Lower lobe of right lung (tissue), 2 donors: ENCODE measurements at regions of chr11 and their contacts with region 1.

Region 1: GRCh38 chr11:75388386-75389275 is 10.7 kb upstream of the RPS3 start:
- DNase-seq: peak; percentile 77
- ATAC-seq: peak; percentile 75 to 85
- H3K4me3 ChIP-seq: no peak overlapping the region
- H3K27ac ChIP-seq: peak overlapping the region; percentile 27
- H3K4me1 ChIP-seq: peaks cover 20% of the 10 kb centered on the region
- H3K27me3 ChIP-seq: no peaks in the 10 kb centered on the region
- CTCF ChIP-seq: peak; percentile 85

Region 2: GRCh38 chr11:75280227-75280701 is 108.4 kb before region 1 on chr11:
- intact Hi-C with region 1: loop called (anchors 10 kb)
- DNase-seq: peak; percentile 75
- ATAC-seq: peak; percentile 77 to 86
- H3K4me3 ChIP-seq: no peak overlapping the region
- H3K27ac ChIP-seq: peak overlapping the region; percentile 58
- H3K4me1 ChIP-seq: peaks cover 44% of the 10 kb centered on the region
- H3K27me3 ChIP-seq: no peaks in the 10 kb centered on the region
- CTCF ChIP-seq: peak; percentile 96

Region 3: DNA sequence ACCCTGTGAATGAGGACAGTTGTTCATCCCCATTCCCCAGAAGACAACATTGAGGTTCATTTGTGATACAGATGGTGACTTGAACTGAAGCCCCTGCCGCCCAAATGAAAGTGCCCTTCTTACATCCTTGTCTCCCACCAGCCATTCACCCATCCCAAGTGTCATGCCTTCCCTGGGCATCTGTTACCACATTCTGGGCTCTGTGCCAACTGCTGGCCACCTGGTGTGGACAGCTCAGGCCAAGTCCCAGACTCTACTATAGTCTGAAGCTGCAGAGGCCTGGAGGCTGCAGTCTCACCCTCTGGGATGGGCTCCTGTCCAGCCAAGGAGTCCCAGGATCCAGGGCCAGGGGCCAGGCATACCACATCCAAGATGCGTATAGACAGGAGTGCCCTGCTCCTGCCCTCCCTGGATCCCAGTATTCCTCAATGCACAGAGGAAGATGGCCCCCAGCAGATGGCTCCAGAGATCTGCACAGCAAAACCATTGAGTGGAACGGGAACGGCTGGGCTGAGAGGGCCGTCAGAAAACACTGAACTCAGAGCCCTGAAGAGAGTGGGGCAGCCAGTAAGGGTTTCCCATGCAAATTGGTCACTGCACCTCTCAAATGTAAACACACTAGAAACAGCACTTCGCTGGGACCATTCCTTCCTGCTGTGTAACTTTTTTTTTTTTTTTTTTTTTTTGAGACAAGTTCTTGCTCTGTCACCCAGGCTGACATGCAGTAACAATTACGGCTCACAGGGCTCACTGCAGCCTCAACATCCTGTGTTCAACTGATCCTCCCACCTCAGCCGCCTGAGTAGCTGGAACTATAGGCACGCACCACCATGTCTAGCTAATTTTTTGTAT is 60.0 kb before region 1 on chr11:
- intact Hi-C with region 1: loop called (anchors 10 kb)
- DNase-seq: peak; percentile 86
- ATAC-seq: peak; percentile 94 to 95
- H3K4me3 ChIP-seq: no peak overlapping the region
- H3K27ac ChIP-seq: peak overlapping the region; percentile 74
- H3K4me1 ChIP-seq: peaks cover 94% of the 10 kb centered on the region
- H3K27me3 ChIP-seq: no peaks in the 10 kb centered on the region
- CTCF ChIP-seq: peak; percentile 72

Region 4: GRCh38 chr11:75689863-75690609 is 301.4 kb after region 1 on chr11:
- intact Hi-C with region 1: no loop called
- DNase-seq: no peak
- ATAC-seq: peak; percentile 25 to 36
- H3K4me3 ChIP-seq: no peak overlapping the region
- H3K27ac ChIP-seq: no peak overlapping the region
- H3K4me1 ChIP-seq: no peaks in the 10 kb centered on the region
- H3K27me3 ChIP-seq: no peaks in the 10 kb centered on the region
- CTCF ChIP-seq: no peak